ENCODE measurements at regions of chr14 and their contacts with region 1.

Region 1: DNA sequence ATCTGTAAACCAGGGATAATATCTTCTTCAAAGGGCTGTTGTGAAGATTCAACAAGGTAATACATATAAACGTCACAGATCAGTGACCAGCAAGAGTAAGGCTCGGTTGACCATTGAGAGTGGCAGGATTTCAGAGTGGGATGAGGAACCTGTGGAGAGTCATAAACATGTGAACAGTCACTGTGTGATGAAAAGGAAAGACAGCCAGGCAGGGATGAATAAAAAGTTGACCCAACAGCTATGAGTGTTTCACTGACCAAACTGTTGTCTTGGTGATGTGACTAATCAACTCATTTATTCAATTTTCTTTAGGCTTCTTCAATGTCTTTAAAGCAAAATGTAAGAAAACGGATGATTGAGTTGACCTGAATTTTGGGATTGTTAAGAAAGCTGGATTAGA is 8.6 kb upstream of the FRMD6 start:
- DNase-seq: no peak
- H3K4me3 ChIP-seq: no peak overlapping the region
- H3K27ac ChIP-seq: no peak overlapping the region
- H3K4me1 ChIP-seq: peaks cover 0 to 11% (median 4%) of the 10 kb centered on the region in 4 donors
- H3K27me3 ChIP-seq: no peaks in the 10 kb centered on the region
- CTCF ChIP-seq: no peak

Region 2: GRCh38 chr14:51534625-51535024 is 108.5 kb before region 1 on chr14:
- intact Hi-C with region 1: no loop called
- DNase-seq: no peak
- H3K4me3 ChIP-seq: no peak overlapping the region
- H3K27ac ChIP-seq: no peak overlapping the region
- H3K4me1 ChIP-seq: peaks cover 0 to 4% (median 4%) of the 10 kb centered on the region in 4 donors
- H3K27me3 ChIP-seq: no peaks in the 10 kb centered on the region
- CTCF ChIP-seq: no peak

Region 3: GRCh38 chr14:51547260-51547659 is 95.9 kb before region 1 on chr14:
- intact Hi-C with region 1: loop called (anchors 10 kb)
- DNase-seq: peak; percentile 55 to 74
- H3K4me3 ChIP-seq: no peak overlapping the region
- H3K27ac ChIP-seq: peak overlapping the region; percentile 43
- H3K4me1 ChIP-seq: peaks cover 0 to 16% (median 14%) of the 10 kb centered on the region in 4 donors
- H3K27me3 ChIP-seq: no peaks in the 10 kb centered on the region
- CTCF ChIP-seq: no peak

Region 4: GRCh38 chr14:51704545-51704944 is 61.4 kb after region 1 on chr14:
- intact Hi-C with region 1: no loop called
- DNase-seq: no peak
- H3K4me3 ChIP-seq: no peak overlapping the region
- H3K27ac ChIP-seq: no peak overlapping the region
- H3K4me1 ChIP-seq: peaks cover 0 to 12% (median 0%) of the 10 kb centered on the region in 4 donors
- H3K27me3 ChIP-seq: no peaks in the 10 kb centered on the region
- CTCF ChIP-seq: no peak

Region 5: GRCh38 chr14:51792819-51793218 is 149.7 kb after region 1 on chr14:
- intact Hi-C with region 1: no loop called
- DNase-seq: no peak
- H3K4me3 ChIP-seq: no peak overlapping the region
- H3K27ac ChIP-seq: no peak overlapping the region
- H3K4me1 ChIP-seq: no peaks in the 10 kb centered on the region
- H3K27me3 ChIP-seq: peaks cover 0 to 2% of the 10 kb centered on the region in 2 donors
- CTCF ChIP-seq: no peak

Measured in tibial artery (tissue), 4 donors.